ENCODE measurements at regions of chr4 and their contacts with region 1.

Region 1: GRCh38 chr4:98873059-98873458 is 55.9 kb downstream of the EIF4E start:
- DNase-seq: no peak

Region 2: DNA sequence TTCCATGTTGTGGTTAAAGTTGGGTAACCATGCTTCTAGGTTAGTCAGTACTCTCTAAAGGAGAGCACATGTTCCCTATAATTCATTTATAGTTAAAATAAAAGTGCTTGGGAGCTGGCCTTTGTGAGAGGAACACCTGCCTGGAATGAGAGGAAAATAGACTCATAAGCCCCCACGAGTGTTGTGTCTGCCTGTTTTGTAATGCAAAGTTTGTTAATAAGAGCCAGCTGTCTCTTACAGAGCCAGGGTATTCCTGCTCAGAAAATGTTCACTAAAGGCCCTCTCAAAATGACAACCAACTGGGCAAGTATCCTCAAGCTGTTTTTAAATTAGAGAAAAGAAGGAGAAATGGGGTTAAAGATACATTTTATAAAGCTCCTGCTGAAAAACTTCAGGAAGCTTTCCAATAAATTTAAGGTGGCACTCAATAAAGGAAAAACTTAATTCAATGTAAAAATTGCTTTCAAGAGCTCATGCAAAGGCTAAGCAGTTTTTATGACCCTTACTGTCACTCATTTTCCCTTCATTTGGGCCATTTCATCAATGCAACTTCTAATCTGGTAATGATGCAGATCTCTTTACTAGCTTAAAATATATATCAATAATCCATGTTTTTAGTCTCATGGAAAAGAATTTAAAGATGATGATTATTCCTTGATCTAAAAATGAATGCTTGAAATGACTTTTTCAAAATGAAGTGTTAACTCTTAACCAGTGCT is 1523.4 kb before region 1 on chr4:
- intact Hi-C with region 1: no loop called
- DNase-seq: no peak

Region 3: GRCh38 chr4:98939892-98940298 is 66.8 kb after region 1 on chr4:
- intact Hi-C with region 1: loop called in 1 of 2 experiments (anchors 2 kb)
- DNase-seq: no peak

Measured in posterior vena cava (tissue), 2 donors.